Heart left ventricle (tissue), 16 donors: ENCODE measurements at regions of chr11 and their contacts with region 1.

Region 1: DNA sequence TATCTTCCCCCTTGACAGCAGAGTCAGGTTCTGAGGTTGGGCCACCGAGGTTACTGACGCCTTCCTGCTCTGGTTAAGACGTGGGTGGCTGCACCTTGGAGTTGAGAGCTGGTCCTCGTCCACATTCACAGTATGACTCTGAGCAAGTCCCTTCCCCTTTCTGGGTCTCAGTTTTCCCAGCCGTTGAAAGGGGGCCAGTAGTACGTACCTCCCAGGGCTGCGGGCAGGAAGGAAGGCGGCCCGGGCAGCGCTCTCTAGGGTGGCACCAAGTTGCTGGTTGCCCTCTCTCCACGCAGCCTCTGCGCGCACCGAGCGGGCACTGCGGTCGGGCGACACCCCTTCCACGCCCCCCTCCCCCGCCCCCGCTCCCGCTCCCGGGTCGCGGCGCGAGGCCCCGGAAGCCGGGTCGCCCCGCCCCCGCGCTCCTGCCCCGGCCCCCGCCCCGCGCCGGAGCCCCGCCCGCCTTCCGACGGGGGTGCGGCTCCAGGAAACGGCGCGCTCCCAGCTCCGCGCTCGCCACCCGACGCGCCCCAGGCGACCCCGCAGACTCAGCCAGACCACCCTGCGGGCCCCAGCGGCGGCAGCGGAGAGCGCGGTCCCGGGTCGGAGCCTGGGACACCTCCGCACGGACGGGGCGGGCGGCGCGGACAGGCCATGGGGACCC is at the start of gene EHBP1L1:
- DNase-seq: peak; percentile 81 to 92 (median 84)
- ATAC-seq: peak in 3 of 4 donors; percentile 1 to 32 (median 12)
- H3K4me3 ChIP-seq: peak within 1 kb of the TSS; percentile 28 to 96 (median 79)
- H3K27ac ChIP-seq: peak within 1 kb of the TSS; percentile 89 to 99 (median 96)
- H3K4me1 ChIP-seq: peaks cover 17 to 77% (median 63%) of the 10 kb centered on the region in 12 donors
- H3K27me3 ChIP-seq: no peaks in the 10 kb centered on the region
- CTCF ChIP-seq: no peak
- POLR2A ChIP-seq: peak in 1 of 2 donors; percentile 38
- total RNA-seq, gene EHBP1L1: 37.4 to 144 (median 80.9) TPM

Region 2: GRCh38 chr11:65593518-65594298 is 18.0 kb after region 1 on chr11:
- intact Hi-C with region 1: loop called in 3 of 10 experiments (anchors 2 kb)
- DNase-seq: peak in 2 of 5 donors; percentile 63 to 71
- ATAC-seq: peak in 3 of 4 donors; percentile 23 to 47 (median 45)
- H3K4me3 ChIP-seq: no peak overlapping the region
- H3K27ac ChIP-seq: peak overlapping the region in 5 of 12 donors; percentile 3 to 54 (median 20)
- H3K4me1 ChIP-seq: peaks cover 0 to 51% (median 33%) of the 10 kb centered on the region in 12 donors
- H3K27me3 ChIP-seq: no peaks in the 10 kb centered on the region
- CTCF ChIP-seq: peak; percentile 56 to 76 (median 66)
- POLR2A ChIP-seq: no peak

Region 3: DNA sequence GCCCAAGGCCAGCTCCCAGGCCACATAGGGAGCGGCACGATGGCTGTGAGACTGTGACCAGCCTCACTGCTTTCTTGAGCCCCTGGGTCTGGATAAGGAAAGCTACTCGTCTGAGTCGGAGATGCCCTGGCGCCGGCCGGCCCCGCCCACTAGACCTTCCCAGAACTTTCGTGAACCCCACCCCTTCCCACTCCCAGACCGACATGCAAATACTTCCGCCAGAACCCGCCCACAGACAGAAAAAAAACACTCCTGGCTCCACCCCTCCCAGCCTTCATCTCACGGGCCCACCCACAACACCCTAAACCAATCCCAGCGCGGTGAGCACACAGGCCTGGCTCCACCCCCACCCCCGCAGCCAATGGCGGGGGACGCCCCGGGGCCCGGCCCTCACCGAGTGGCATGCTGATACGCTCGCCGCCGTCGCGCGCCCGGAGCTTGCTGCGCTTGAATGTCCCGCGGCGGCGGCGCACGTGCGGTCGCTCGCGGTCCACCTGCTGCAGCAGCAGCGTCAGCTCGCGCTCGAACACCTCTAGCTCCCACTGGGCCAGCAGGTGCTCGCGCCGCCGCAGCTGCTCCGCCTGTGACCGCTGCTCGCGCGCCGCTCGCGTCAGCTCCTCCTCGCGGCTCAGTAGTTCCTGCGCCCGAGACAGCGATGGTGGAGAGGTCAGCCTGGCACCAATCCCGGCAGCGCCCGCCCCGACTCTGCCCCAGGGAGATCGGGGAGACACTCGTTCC is 31.3 kb after region 1 on chr11:
- intact Hi-C with region 1: loop called in 6 of 10 experiments (anchors 2 to 5 kb)
- DNase-seq: peak; percentile 93 to 96 (median 96)
- ATAC-seq: peak; percentile 90 to 97 (median 96)
- H3K4me3 ChIP-seq: peak overlapping the region in 10 of 12 donors; percentile 17 to 56 (median 40)
- H3K27ac ChIP-seq: peak overlapping the region; percentile 29 to 89 (median 74)
- H3K4me1 ChIP-seq: peaks cover 4 to 76% (median 44%) of the 10 kb centered on the region in 12 donors
- H3K27me3 ChIP-seq: no peaks in the 10 kb centered on the region
- CTCF ChIP-seq: no peak
- POLR2A ChIP-seq: peak in 1 of 2 donors; percentile 19

Region 4: GRCh38 chr11:65625628-65626342 is 50.1 kb after region 1 on chr11:
- intact Hi-C with region 1: no loop called
- DNase-seq: peak; percentile 64 to 84 (median 71)
- ATAC-seq: peak; percentile 57 to 82 (median 74)
- H3K4me3 ChIP-seq: no peak overlapping the region
- H3K27ac ChIP-seq: no peak overlapping the region
- H3K4me1 ChIP-seq: peaks cover 0 to 19% (median 6%) of the 10 kb centered on the region in 12 donors
- H3K27me3 ChIP-seq: no peaks in the 10 kb centered on the region
- CTCF ChIP-seq: peak; percentile 51 to 75 (median 68)
- POLR2A ChIP-seq: no peak